ENCODE measurements at regions of chr16 and their contacts with region 1.

Region 1: GRCh38 chr16:29790183-29790952 is at the start of gene KIF22:
- DNase-seq: peak; percentile 99
- ATAC-seq: peak; percentile 96 to 98
- H3K4me3 ChIP-seq: peak within 1 kb of the TSS; percentile 91 to 95 (median 92)
- H3K27ac ChIP-seq: peak within 1 kb of the TSS; percentile 89 to 95 (median 93)
- H3K4me1 ChIP-seq: peaks cover 18 to 24% of the 10 kb centered on the region in 2 donors
- H3K27me3 ChIP-seq: no peaks in the 10 kb centered on the region
- CTCF ChIP-seq: peak; percentile 68 to 89 (median 79)
- POLR2A ChIP-seq: peak; percentile 51 to 60
- total RNA-seq, gene KIF22: 9.0 to 13.9 (median 12.8) TPM

Region 2: DNA sequence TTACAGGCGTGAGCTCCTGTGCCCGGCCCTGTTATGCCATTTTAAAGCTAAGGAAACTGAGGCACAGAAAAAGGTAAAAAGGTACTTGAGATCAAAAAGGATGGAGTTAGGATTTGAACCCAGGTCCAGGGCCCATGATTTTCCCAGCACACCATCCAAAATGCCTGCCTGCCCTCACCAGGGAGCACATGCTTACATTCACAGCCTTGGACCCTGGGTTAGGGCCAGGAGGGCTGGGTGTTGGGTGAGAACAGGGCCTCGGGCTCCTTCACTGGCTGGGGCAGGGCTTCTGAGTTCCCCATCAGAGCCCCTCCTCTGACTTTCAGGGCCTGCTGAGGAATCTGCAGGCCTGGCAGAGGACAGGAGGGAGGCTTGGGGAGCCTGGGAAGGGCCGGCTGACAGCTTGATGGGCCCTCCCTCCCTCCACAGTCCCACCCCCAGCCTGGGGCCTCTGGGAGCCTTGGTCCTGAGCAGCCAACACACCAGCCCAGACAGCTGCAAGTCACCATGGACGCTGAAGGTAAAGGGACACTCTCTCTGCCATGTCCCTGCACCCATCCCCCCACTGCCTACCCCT is 111.6 kb before region 1 on chr16 and contains the start of gene QPRT:
- in situ Hi-C with region 1: no loop called
- intact Hi-C with region 1: no loop called
- DNase-seq: no peak
- ATAC-seq: no peak
- H3K4me3 ChIP-seq: peak within 1 kb of the TSS in 3 of 4 donors; percentile 6 to 18 (median 17)
- H3K27ac ChIP-seq: peak within 1 kb of the TSS in 2 of 4 donors; percentile 52 to 54
- H3K4me1 ChIP-seq: no peaks in the 10 kb centered on the region
- H3K27me3 ChIP-seq: no peaks in the 10 kb centered on the region
- CTCF ChIP-seq: no peak
- POLR2A ChIP-seq: no peak
- total RNA-seq, gene QPRT: 0.78 to 2.5 (median 1.5) TPM

Region 3: DNA sequence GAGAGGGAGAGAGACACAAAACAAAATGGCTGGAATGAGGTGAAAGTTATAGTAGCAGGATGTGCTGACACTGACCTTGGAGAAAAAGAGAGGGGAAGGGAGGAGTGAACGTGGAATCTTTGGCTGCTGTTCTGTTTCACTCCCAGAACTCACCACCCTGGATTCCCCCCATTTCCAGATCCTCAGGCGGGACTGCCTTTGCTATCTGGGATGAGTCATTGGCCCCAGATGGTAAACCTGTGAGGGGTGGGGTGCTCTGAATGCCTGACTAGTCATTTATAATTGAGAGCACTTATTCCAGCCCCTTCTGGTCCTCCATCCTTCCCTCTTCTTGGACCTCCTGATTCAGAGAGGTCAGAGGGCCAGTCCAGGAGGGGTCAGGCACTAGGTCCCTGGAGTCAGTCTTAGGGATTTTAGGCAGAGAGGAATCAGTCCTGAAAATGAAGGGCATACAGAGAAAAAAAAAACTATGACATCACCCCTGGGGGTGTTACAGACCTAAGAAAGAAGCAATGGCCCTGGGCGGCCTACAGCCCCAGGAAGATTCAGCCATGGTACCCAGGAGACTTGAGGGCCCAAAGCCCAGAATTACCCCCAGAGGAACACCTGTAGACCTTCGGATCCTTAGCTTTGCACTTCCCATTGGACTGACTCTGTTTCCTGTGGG is 14.5 kb before region 1 on chr16:
- in situ Hi-C with region 1: no loop called
- intact Hi-C with region 1: no loop called
- DNase-seq: no peak
- ATAC-seq: no peak
- H3K4me3 ChIP-seq: no peak overlapping the region
- H3K27ac ChIP-seq: no peak overlapping the region
- H3K4me1 ChIP-seq: no peaks in the 10 kb centered on the region
- H3K27me3 ChIP-seq: peaks cover 0 to 5% (median 4%) of the 10 kb centered on the region in 3 donors
- CTCF ChIP-seq: no peak
- POLR2A ChIP-seq: no peak

Region 4: GRCh38 chr16:29848420-29849297 is 58.3 kb after region 1 on chr16:
- in situ Hi-C with region 1: no loop called
- intact Hi-C with region 1: no loop called
- DNase-seq: peak; percentile 33 to 50
- ATAC-seq: peak; percentile 50 to 87
- H3K4me3 ChIP-seq: no peak overlapping the region
- H3K27ac ChIP-seq: no peak overlapping the region
- H3K4me1 ChIP-seq: no peaks in the 10 kb centered on the region
- H3K27me3 ChIP-seq: no peaks in the 10 kb centered on the region
- CTCF ChIP-seq: peak; percentile 72 to 93 (median 84)
- POLR2A ChIP-seq: no peak

Region 5: DNA sequence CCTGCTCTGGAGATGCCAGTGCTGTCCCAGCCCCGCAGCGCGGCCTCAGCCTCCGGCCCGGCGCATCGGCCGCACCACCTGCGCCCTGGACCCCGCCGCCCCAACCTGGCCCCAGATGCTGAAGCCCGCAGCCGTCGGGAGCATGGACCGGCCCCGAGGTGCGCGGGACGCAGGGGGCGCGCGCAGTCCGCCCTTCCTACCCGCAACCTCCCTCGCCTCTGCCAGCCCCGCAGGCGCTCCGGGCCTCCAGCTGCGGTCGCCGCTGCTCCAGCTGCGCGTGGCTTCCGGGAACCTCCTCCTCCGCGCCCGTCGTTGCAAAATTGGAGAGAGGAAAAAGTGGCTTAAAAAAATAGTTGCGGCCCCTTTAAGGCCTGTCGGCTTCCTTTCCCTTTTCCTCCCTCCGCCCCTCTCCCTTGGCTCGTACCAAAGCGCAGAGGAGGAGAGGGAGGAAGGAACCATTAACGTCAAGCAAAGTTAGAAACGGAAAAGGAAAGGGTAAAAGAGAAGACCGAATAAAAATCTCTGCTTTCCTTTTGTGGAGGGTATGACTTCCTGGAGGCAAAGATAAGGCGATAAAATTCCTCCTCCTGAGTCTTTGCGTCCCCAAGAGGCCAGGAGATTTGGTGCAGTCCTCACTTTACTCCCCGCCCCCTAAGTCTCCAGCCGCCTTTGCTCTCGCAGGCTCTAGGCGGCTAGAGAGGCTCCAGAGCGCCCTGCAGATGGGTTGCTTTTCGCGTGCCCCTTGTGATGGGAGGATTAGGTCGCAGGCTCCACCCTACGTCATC is 72.7 kb after region 1 on chr16 and contains the start of gene CDIPT:
- in situ Hi-C with region 1: no loop called
- intact Hi-C with region 1: loop called (anchors 2 kb)
- DNase-seq: peak; percentile 92 to 94
- ATAC-seq: peak; percentile 99
- H3K4me3 ChIP-seq: peak within 1 kb of the TSS; percentile 78 to 98 (median 80)
- H3K27ac ChIP-seq: peak within 1 kb of the TSS; percentile 87 to 96 (median 93)
- H3K4me1 ChIP-seq: peaks cover 18 to 20% of the 10 kb centered on the region in 2 donors
- H3K27me3 ChIP-seq: no peaks in the 10 kb centered on the region
- CTCF ChIP-seq: peak; percentile 32 to 64 (median 57)
- POLR2A ChIP-seq: peak; percentile 36 to 41
- total RNA-seq, gene CDIPT: 35.5 to 71.8 (median 55.7) TPM

Region 6: GRCh38 chr16:29961479-29962343 is 171.3 kb after region 1 on chr16 and contains the start of gene TMEM219:
- in situ Hi-C with region 1: no loop called
- intact Hi-C with region 1: loop called (anchors 1 kb)
- DNase-seq: peak; percentile 62 to 81
- ATAC-seq: peak; percentile 95 to 96
- H3K4me3 ChIP-seq: peak within 1 kb of the TSS; percentile 67 to 95 (median 80)
- H3K27ac ChIP-seq: peak within 1 kb of the TSS; percentile 74 to 94 (median 88)
- H3K4me1 ChIP-seq: peaks cover 6 to 12% of the 10 kb centered on the region in 2 donors
- H3K27me3 ChIP-seq: no peaks in the 10 kb centered on the region
- CTCF ChIP-seq: peak; percentile 57 to 70 (median 67)
- POLR2A ChIP-seq: peak; percentile 53 to 55
- total RNA-seq, gene TMEM219: 48.1 to 120 (median 60.2) TPM

Measured in gastrocnemius medialis (tissue), 4 donors.